ENCODE measurements at regions of chr1 and their contacts with region 1.

Region 1: GRCh38 chr1:67149179-67149770 is 14.5 kb upstream of the C1orf141 start:
- DNase-seq: peak in 8 of 9 donors; percentile 49 to 81 (median 72)
- ATAC-seq: peak; percentile 91
- H3K4me3 ChIP-seq: no peak overlapping the region
- H3K4me3 Mint-ChIP-seq: peak overlapping the region in 3 of 10 donors; percentile 32 to 35 (median 33)
- H3K27ac ChIP-seq: no peak overlapping the region
- H3K27ac Mint-ChIP-seq: peak overlapping the region in 4 of 9 donors; percentile 34 to 75 (median 61)
- H3K4me1 ChIP-seq: peaks cover 0 to 6% of the 10 kb centered on the region in 2 donors
- H3K4me1 Mint-ChIP-seq: peaks cover 7 to 36% (median 34%) of the 10 kb centered on the region in 7 donors
- H3K27me3 ChIP-seq: no peaks in the 10 kb centered on the region
- H3K27me3 Mint-ChIP-seq: peaks cover 0 to 9% (median 0%) of the 10 kb centered on the region in 5 donors

Region 2: DNA sequence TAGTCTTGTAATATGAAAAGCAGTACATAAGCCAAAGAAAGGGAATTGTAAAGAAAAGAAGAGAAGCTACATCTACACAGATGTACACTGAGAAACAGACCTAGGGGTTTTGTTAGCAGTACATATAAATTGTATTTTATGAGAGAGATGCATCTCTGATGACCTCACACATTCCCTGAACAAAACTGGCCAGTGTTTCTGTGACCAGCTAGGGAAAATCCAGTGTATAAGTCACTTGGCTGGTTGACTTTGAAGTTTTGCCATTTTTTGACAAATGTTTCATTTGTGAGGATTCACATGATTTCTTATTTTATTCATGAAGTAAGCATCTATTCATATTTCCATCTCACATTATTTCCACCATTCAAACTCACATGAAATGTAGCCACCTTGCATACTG is 425.3 kb before region 1 on chr1:
- CTCF ChIA-PET with region 1: no interaction called
- POLR2A ChIA-PET with region 1: no interaction called
- intact Hi-C with region 1: no loop called
- DNase-seq: no peak
- ATAC-seq: no peak
- H3K4me3 ChIP-seq: no peak overlapping the region
- H3K4me3 Mint-ChIP-seq: no peak overlapping the region
- H3K27ac ChIP-seq: no peak overlapping the region
- H3K27ac Mint-ChIP-seq: no peak overlapping the region
- H3K4me1 ChIP-seq: peaks cover 0 to 3% of the 10 kb centered on the region in 2 donors
- H3K4me1 Mint-ChIP-seq: peaks cover under 1 to 17% (median 10%) of the 10 kb centered on the region in 7 donors
- H3K27me3 ChIP-seq: peaks cover 0 to 2% of the 10 kb centered on the region in 2 donors
- H3K27me3 Mint-ChIP-seq: peaks cover 9 to 39% (median 17%) of the 10 kb centered on the region in 5 donors

Region 3: GRCh38 chr1:66924756-66925557 is 224.3 kb before region 1 on chr1 and contains the starts of genes DNAI4 and MIER1:
- CTCF ChIA-PET with region 1: interaction called, 10 read pairs
- POLR2A ChIA-PET with region 1: interaction called, 5 read pairs
- intact Hi-C with region 1: loop called (anchors 1 to 5 kb)
- DNase-seq: peak; percentile 91 to 98 (median 96)
- ATAC-seq: peak; percentile 97
- H3K4me3 ChIP-seq: peak within 1 kb of the TSS; percentile 83
- H3K4me3 Mint-ChIP-seq: peak within 1 kb of the TSS; percentile 92 to 98 (median 96)
- H3K27ac ChIP-seq: peak within 1 kb of the TSS; percentile 95
- H3K27ac Mint-ChIP-seq: peak within 1 kb of the TSS; percentile 95 to 97 (median 97)
- H3K4me1 ChIP-seq: peaks cover 24 to 37% of the 10 kb centered on the region in 2 donors
- H3K4me1 Mint-ChIP-seq: peaks cover 18 to 75% (median 60%) of the 10 kb centered on the region in 7 donors
- H3K27me3 ChIP-seq: no peaks in the 10 kb centered on the region
- H3K27me3 Mint-ChIP-seq: no peaks in the 10 kb centered on the region
- total RNA-seq, gene DNAI4: 1.3 to 10.7 (median 9.7) TPM
- total RNA-seq, gene MIER1: 51.5 to 73.6 (median 70.9) TPM

Region 4: DNA sequence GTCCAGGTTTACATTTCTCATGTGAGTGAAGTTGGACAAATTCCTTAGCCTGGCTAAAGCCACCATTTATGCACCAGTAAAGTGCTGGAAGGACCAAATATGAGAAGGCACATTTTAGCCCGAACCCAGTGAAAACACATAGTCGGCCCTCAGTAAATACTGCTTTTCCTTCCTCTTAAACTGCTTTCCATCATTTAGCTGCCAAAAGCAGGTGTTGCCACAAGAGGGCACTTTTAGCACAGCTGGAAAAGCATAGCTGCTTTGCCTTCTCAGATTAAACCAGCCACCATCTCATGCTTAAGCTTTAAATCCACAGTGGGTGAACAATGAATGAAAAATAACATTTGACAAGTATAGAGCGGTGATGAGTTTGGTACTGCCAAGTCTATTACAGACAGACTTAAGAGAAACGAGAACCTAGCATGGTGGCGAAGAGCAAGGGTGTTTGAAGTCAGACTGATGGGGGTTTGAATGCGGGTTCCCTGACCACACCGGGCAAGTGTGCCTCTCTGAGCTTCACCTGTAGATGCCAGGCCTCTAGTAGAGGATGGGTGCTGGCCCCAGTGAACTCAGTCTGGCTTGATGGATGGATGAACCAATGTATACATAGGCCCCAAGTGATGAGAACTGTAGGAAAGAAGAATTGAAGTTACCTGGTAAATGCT is 153.1 kb before region 1 on chr1:
- CTCF ChIA-PET with region 1: interaction called, 123 read pairs
- POLR2A ChIA-PET with region 1: interaction called, 12 read pairs
- intact Hi-C with region 1: loop called (anchors 1 kb)
- DNase-seq: peak; percentile 14 to 75 (median 63)
- ATAC-seq: peak; percentile 93
- H3K4me3 ChIP-seq: no peak overlapping the region
- H3K4me3 Mint-ChIP-seq: no peak overlapping the region
- H3K27ac ChIP-seq: no peak overlapping the region
- H3K27ac Mint-ChIP-seq: peak overlapping the region in 5 of 9 donors; percentile 7 to 78 (median 74)
- H3K4me1 ChIP-seq: peaks cover 0 to 5% of the 10 kb centered on the region in 2 donors
- H3K4me1 Mint-ChIP-seq: peaks cover 4 to 24% (median 23%) of the 10 kb centered on the region in 7 donors
- H3K27me3 ChIP-seq: no peaks in the 10 kb centered on the region
- H3K27me3 Mint-ChIP-seq: no peaks in the 10 kb centered on the region

Region 5: DNA sequence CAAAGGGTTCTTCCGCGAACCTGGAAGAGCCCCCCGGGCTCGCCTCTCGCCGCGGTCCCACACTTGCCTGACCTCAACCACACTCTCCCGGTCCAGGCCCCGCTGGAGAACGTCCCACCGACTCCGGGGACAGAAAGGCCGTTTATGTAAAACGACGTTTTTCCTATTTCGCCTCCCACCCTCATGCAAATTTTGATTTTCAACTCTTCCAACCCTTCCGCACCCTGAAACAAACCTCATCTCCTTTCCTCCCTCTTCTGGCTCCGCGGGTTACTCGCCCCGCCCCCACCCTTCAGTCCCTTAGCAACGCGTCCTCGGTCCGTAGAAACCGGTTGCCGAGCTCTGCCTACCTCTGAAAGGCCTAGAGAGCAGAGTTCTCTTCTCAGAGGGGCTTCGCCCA is 14.6 kb before region 1 on chr1 and contains the start of gene C1orf141:
- CTCF ChIA-PET with region 1: interaction called, 9 read pairs
- POLR2A ChIA-PET with region 1: interaction called, 10 read pairs
- intact Hi-C with region 1: no loop called
- DNase-seq: peak in 1 of 9 donors; percentile 18
- ATAC-seq: peak; percentile 48
- H3K4me3 ChIP-seq: peak within 1 kb of the TSS; percentile 52
- H3K4me3 Mint-ChIP-seq: peak within 1 kb of the TSS; percentile 81 to 95 (median 86)
- H3K27ac ChIP-seq: no peak within 1 kb of the TSS
- H3K27ac Mint-ChIP-seq: peak within 1 kb of the TSS in 5 of 9 donors; percentile 26 to 81 (median 67)
- H3K4me1 ChIP-seq: no peaks in the 10 kb centered on the region
- H3K4me1 Mint-ChIP-seq: peaks cover 9 to 22% (median 11%) of the 10 kb centered on the region in 7 donors
- H3K27me3 ChIP-seq: no peaks in the 10 kb centered on the region
- H3K27me3 Mint-ChIP-seq: peaks cover 0 to 10% (median 5%) of the 10 kb centered on the region in 5 donors
- total RNA-seq, gene C1orf141: not detected

Region 6: DNA sequence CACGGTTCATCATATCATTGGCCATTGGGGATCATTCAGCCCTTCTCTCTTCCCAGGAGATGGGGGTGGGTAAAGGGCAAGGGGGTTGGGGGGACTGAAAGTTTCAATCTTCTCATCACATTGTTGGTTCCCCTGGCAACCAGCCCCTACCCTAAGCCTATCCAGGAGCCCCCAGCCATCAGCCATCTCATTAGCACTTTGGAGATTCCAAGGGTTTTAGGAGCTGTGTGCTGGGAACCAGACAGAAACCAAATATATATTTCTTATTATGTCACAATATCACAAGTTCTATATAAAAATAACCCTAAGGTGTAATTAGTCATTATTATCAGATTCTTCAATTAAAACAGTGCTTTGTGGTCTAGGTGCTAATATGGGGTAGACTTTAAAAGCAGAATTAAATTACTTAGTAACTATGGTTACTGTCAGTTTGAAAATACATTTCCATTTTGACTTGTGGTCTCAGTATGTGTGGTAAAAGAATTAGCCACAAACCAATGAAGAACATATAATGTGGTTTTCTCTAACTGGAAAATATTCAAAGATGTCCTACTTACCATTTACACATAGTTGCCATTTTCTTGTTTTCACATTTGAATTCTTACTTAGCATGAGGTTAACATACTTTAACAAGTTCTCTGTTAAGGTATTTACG is 45.1 kb after region 1 on chr1:
- CTCF ChIA-PET with region 1: interaction called, 4 read pairs
- POLR2A ChIA-PET with region 1: no interaction called
- intact Hi-C with region 1: loop called in 1 of 2 experiments (anchors 2 kb)
- DNase-seq: peak in 4 of 9 donors; percentile 19 to 49 (median 31)
- ATAC-seq: peak; percentile 73
- H3K4me3 ChIP-seq: no peak overlapping the region
- H3K4me3 Mint-ChIP-seq: peak overlapping the region in 2 of 10 donors; percentile 15 to 17
- H3K27ac ChIP-seq: no peak overlapping the region
- H3K27ac Mint-ChIP-seq: peak overlapping the region in 1 of 9 donors; percentile 75
- H3K4me1 ChIP-seq: peaks cover 4 to 20% of the 10 kb centered on the region in 2 donors
- H3K4me1 Mint-ChIP-seq: peaks cover 4 to 30% (median 12%) of the 10 kb centered on the region in 7 donors
- H3K27me3 ChIP-seq: no peaks in the 10 kb centered on the region
- H3K27me3 Mint-ChIP-seq: peaks cover 0 to 3% (median 0%) of the 10 kb centered on the region in 5 donors

Measured in naive thymus-derived CD4-positive, alpha-beta T cell (primary cell).